CD14-positive monocyte (primary cell): ENCODE measurements at regions of chr3 and their contacts with region 1.

Region 1: GRCh38 chr3:99895703-99896441 is 78.2 kb downstream of the CMSS1 start:
- DNase-seq: peak; percentile 85 to 95 (median 93)
- H3K4me3 ChIP-seq: peak overlapping the region; percentile 30 to 60 (median 56)
- H3K4me3 Mint-ChIP-seq: peak overlapping the region; percentile 57 to 83
- H3K27ac ChIP-seq: peak overlapping the region; percentile 24 to 94
- H3K27ac Mint-ChIP-seq: peak overlapping the region; percentile 93 to 98 (median 97)
- H3K4me1 ChIP-seq: peaks cover 32 to 35% of the 10 kb centered on the region in 2 donors
- H3K4me1 Mint-ChIP-seq: peaks cover 30% of the 10 kb centered on the region
- H3K27me3 ChIP-seq: no peaks in the 10 kb centered on the region
- H3K27me3 Mint-ChIP-seq: no peaks in the 10 kb centered on the region
- CTCF ChIP-seq: no peak

Region 2: DNA sequence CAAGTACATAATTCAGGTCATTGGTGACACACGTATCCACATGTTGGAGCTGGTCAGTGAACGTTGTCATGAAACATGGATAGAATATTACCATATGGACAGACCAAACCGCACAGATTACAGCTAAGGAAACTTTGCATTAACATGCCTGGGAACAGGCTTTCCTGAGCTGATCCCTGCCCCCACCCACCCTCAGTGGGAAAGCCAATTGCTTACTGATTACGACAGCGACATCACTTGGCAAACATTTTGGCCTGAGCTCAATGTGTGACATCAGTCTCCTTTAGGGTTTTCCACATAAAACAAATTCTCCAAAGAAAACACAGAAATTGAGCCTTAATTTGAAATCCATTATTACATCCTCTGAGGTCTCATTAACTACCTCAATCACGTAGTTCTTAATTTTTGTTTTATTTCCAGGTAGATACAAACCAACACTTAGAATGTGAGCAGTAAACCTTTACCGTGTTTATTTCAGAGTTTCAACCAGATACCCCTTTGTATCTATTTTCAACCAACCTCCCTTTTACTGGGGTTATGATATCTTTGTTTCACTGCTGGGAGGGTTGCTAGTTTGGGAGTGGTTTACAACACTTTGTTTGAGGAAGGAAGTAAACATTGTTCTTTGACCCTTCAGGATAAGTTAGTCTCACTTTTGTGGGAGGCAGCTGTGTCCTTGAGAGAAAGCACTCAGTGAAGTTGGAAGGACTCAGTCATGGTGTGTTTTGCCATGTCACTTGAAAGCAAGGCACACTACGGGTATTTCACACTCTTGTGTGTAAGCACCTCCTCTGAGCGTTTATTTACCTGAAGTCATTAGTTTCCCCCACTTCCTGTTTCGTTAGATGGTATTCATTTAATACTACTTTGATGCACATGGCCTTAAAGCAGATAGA is 24.9 kb after region 1 on chr3:
- intact Hi-C with region 1: no loop called
- DNase-seq: peak in 2 of 3 donors; percentile 1 to 5
- H3K4me3 ChIP-seq: peak overlapping the region in 1 of 3 experiments; percentile 41
- H3K4me3 Mint-ChIP-seq: peak overlapping the region in 1 of 2 donors; percentile 37
- H3K27ac ChIP-seq: peak overlapping the region in 1 of 2 donors; percentile 55
- H3K27ac Mint-ChIP-seq: peak overlapping the region in 4 of 7 donors; percentile 15 to 75 (median 31)
- H3K4me1 ChIP-seq: peaks cover 8 to 10% of the 10 kb centered on the region in 2 donors
- H3K4me1 Mint-ChIP-seq: peaks cover 11% of the 10 kb centered on the region
- H3K27me3 ChIP-seq: no peaks in the 10 kb centered on the region
- H3K27me3 Mint-ChIP-seq: no peaks in the 10 kb centered on the region
- CTCF ChIP-seq: no peak

Region 3: GRCh38 chr3:100047455-100048141 is 151.7 kb after region 1 on chr3:
- intact Hi-C with region 1: loop called in 1 of 2 experiments (anchors 10 kb)
- DNase-seq: peak; percentile 53 to 74 (median 68)
- H3K4me3 ChIP-seq: peak overlapping the region; percentile 6 to 61 (median 49)
- H3K4me3 Mint-ChIP-seq: peak overlapping the region; percentile 75 to 90
- H3K27ac ChIP-seq: peak overlapping the region; percentile 62 to 80
- H3K27ac Mint-ChIP-seq: peak overlapping the region; percentile 90 to 97 (median 93)
- H3K4me1 ChIP-seq: peaks cover 54 to 58% of the 10 kb centered on the region in 2 donors
- H3K4me1 Mint-ChIP-seq: peaks cover 56% of the 10 kb centered on the region
- H3K27me3 ChIP-seq: no peaks in the 10 kb centered on the region
- H3K27me3 Mint-ChIP-seq: no peaks in the 10 kb centered on the region
- CTCF ChIP-seq: no peak